AG04450 (cell line): ENCODE measurements at regions of chr1 and their contacts with region 1.

Region 1: DNA sequence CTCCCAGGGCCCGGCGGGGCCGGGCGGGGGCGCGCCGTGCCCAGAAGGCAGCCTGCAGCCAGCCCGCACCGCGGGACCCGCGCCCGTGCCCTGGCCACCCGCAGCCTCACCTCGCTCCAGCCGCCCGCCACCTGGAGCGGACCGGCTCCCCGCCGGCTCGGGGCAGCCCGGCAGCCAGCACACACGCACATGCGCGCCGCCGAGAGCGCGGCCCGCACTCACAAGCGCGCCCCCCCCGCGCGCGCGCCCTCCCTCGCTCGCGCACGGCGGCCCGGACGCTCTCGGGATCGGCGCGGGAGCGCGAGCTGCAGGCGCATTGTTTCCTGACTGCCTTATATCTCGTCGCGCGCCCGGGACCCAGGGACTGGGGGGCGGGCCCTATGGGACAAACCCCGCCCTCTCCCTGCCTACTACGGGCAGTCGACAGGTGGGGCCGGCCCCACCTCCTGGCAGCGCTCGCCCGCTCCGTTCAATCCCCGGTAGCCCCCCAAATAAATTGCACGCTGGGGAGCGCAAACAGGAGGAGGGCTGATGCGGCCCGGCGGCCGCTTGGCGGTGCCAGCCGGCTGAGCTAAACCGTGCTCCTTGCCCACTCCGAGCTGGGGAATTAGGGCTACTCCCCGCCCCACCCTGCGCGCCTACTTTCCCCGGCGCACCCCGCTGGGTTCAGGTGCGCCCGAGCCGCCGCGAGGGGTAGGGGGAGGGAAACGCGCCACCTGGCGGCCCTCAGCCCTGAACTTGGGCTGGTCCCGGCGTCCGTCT is at the start of gene MYCL:
- DNase-seq: no peak
- H3K4me3 ChIP-seq: peak within 1 kb of the TSS; percentile 66
- H3K27ac ChIP-seq: no peak within 1 kb of the TSS
- H3K27me3 ChIP-seq: peaks cover 21% of the 10 kb centered on the region
- CTCF ChIP-seq: peak; percentile 63
- polyA plus RNA-seq, gene MYCL: 0.66 and 0.77 TPM in 2 replicates

Region 2: GRCh38 chr1:39816415-39817090 is 85.3 kb before region 1 on chr1:
- CTCF ChIA-PET with region 1: interaction called, 40 read pairs
- POLR2A ChIA-PET with region 1: no interaction called
- DNase-seq: peak; percentile 23
- H3K4me3 ChIP-seq: no peak overlapping the region
- H3K27ac ChIP-seq: no peak overlapping the region
- H3K27me3 ChIP-seq: peaks cover 12% of the 10 kb centered on the region
- CTCF ChIP-seq: peak; percentile 82

Region 3: GRCh38 chr1:39882152-39882551 is 19.7 kb before region 1 on chr1:
- CTCF ChIA-PET with region 1: interaction called, 17 read pairs
- POLR2A ChIA-PET with region 1: interaction called, 7 read pairs
- DNase-seq: no peak
- H3K4me3 ChIP-seq: peak overlapping the region; percentile 94
- H3K27ac ChIP-seq: no peak overlapping the region
- H3K27me3 ChIP-seq: no peaks in the 10 kb centered on the region
- CTCF ChIP-seq: no peak

Region 4: GRCh38 chr1:39944410-39945112 is 42.7 kb after region 1 on chr1:
- CTCF ChIA-PET with region 1: no interaction called
- POLR2A ChIA-PET with region 1: no interaction called
- DNase-seq: no peak
- H3K4me3 ChIP-seq: no peak overlapping the region
- H3K27ac ChIP-seq: no peak overlapping the region
- H3K27me3 ChIP-seq: peaks cover 36% of the 10 kb centered on the region
- CTCF ChIP-seq: no peak

Region 5: DNA sequence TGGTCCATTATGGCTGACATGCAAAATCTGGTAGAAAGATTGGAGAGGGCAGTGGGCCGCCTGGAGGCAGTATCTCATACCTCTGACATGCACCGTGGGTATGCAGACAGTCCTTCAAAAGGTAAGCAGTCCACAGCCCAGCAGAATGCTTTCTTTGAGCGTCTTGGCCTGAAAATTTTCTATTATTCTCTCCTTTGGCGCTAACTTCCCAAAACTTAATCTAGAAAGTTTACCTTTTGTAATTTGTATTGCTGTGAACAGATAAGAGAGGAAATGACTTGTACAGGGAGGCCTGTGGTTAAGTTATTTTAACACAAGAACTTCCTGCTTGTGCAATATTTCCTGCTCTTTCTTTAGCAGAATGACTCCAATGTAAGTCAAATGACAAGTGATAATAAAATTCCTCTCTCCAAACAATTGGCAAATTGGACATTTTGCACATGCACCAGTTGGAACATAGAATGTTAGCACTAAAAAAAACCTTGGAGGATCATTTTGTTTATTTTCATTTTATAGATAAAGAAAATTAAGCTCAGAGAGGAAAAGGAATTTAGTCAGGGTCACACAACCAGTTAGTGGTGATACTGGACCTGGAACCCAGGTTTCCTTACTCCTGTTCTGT is 157.6 kb after region 1 on chr1:
- CTCF ChIA-PET with region 1: no interaction called
- POLR2A ChIA-PET with region 1: no interaction called
- DNase-seq: no peak
- H3K4me3 ChIP-seq: no peak overlapping the region
- H3K27ac ChIP-seq: no peak overlapping the region
- H3K27me3 ChIP-seq: no peaks in the 10 kb centered on the region
- CTCF ChIP-seq: no peak